ENCODE measurements at regions of chr12 and their contacts with region 1.

Region 1: GRCh38 chr12:101939856-101940265 is 62.5 kb downstream of the DRAM1 start:
- DNase-seq: peak; percentile 83
- ATAC-seq: peak; percentile 66
- H3K4me3 ChIP-seq: no peak overlapping the region
- H3K4me3 Mint-ChIP-seq: no peak overlapping the region
- H3K27ac ChIP-seq: no peak overlapping the region
- H3K27ac Mint-ChIP-seq: peak overlapping the region; percentile 42
- H3K4me1 ChIP-seq: peaks cover 49 to 53% of the 10 kb centered on the region in 2 donors
- H3K4me1 Mint-ChIP-seq: peaks cover 58% of the 10 kb centered on the region
- H3K27me3 ChIP-seq: no peaks in the 10 kb centered on the region
- H3K27me3 Mint-ChIP-seq: no peaks in the 10 kb centered on the region
- CTCF ChIP-seq: peak; percentile 91

Region 2: GRCh38 chr12:100632445-100632892 is 1307.4 kb before region 1 on chr12:
- CTCF ChIA-PET with region 1: no interaction called
- POLR2A ChIA-PET with region 1: no interaction called
- intact Hi-C with region 1: no loop called
- DNase-seq: no peak
- ATAC-seq: no peak
- H3K4me3 ChIP-seq: no peak overlapping the region
- H3K4me3 Mint-ChIP-seq: no peak overlapping the region
- H3K27ac ChIP-seq: no peak overlapping the region
- H3K27ac Mint-ChIP-seq: no peak overlapping the region
- H3K4me1 ChIP-seq: no peaks in the 10 kb centered on the region
- H3K4me1 Mint-ChIP-seq: no peaks in the 10 kb centered on the region
- H3K27me3 ChIP-seq: no peaks in the 10 kb centered on the region
- H3K27me3 Mint-ChIP-seq: no peaks in the 10 kb centered on the region
- CTCF ChIP-seq: no peak

Region 3: DNA sequence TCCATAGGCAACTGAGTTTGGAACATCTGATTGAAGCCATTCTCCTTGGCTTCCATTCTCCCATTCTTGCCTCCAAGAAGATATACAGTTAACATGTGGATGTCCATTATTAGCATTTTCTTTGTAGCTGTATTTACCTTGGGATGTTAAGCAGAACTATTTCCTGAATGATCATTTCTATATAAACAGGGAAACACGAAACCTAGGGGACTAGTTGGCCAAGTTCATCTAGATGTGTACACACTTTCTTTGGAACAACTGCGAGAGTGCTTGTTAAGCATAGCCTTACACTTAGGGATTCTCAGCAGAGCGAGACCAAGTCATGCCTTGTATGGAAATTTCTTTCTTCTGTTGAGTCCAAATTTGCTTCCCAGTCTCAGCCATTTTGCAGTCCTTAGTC is 20.4 kb before region 1 on chr12:
- CTCF ChIA-PET with region 1: interaction called, 89 read pairs
- POLR2A ChIA-PET with region 1: interaction called, 4 read pairs
- intact Hi-C with region 1: loop called (anchors 1 kb)
- DNase-seq: no peak
- ATAC-seq: no peak
- H3K4me3 ChIP-seq: no peak overlapping the region
- H3K4me3 Mint-ChIP-seq: no peak overlapping the region
- H3K27ac ChIP-seq: no peak overlapping the region
- H3K27ac Mint-ChIP-seq: no peak overlapping the region
- H3K4me1 ChIP-seq: peaks cover 10 to 13% of the 10 kb centered on the region in 2 donors
- H3K4me1 Mint-ChIP-seq: peaks cover 19% of the 10 kb centered on the region
- H3K27me3 ChIP-seq: no peaks in the 10 kb centered on the region
- H3K27me3 Mint-ChIP-seq: no peaks in the 10 kb centered on the region
- CTCF ChIP-seq: no peak

Region 4: GRCh38 chr12:102061560-102062418 is 121.9 kb after region 1 on chr12 and contains the start of gene WASHC3:
- CTCF ChIA-PET with region 1: interaction called, 14 read pairs
- POLR2A ChIA-PET with region 1: interaction called, 3 read pairs
- intact Hi-C with region 1: no loop called
- DNase-seq: peak; percentile 95
- ATAC-seq: peak; percentile 96
- H3K4me3 ChIP-seq: peak within 1 kb of the TSS; percentile 72 to 92 (median 89)
- H3K4me3 Mint-ChIP-seq: peak within 1 kb of the TSS; percentile 95
- H3K27ac ChIP-seq: peak within 1 kb of the TSS; percentile 93 to 96
- H3K27ac Mint-ChIP-seq: peak within 1 kb of the TSS; percentile 96
- H3K4me1 ChIP-seq: peaks cover 5 to 12% of the 10 kb centered on the region in 2 donors
- H3K4me1 Mint-ChIP-seq: peaks cover 27% of the 10 kb centered on the region
- H3K27me3 ChIP-seq: peaks cover 0 to 4% (median 0%) of the 10 kb centered on the region in 4 experiments
- H3K27me3 Mint-ChIP-seq: no peaks in the 10 kb centered on the region
- CTCF ChIP-seq: no peak
- total RNA-seq, gene WASHC3: 52.8 and 55.8 TPM in 2 replicates

Region 5: GRCh38 chr12:102484428-102484958 is 544.6 kb after region 1 on chr12:
- CTCF ChIA-PET with region 1: interaction called, 59 read pairs
- POLR2A ChIA-PET with region 1: no interaction called
- intact Hi-C with region 1: loop called (anchors 1 kb)
- DNase-seq: peak; percentile 73
- ATAC-seq: peak; percentile 75
- H3K4me3 ChIP-seq: peak overlapping the region in 3 of 5 experiments; percentile 11 to 55 (median 44)
- H3K4me3 Mint-ChIP-seq: peak overlapping the region; percentile 80
- H3K27ac ChIP-seq: peak overlapping the region; percentile 19 to 44
- H3K27ac Mint-ChIP-seq: peak overlapping the region; percentile 64
- H3K4me1 ChIP-seq: peaks cover 23 to 27% of the 10 kb centered on the region in 2 donors
- H3K4me1 Mint-ChIP-seq: peaks cover 32% of the 10 kb centered on the region
- H3K27me3 ChIP-seq: no peaks in the 10 kb centered on the region
- H3K27me3 Mint-ChIP-seq: no peaks in the 10 kb centered on the region
- CTCF ChIP-seq: peak; percentile 98

Region 6: DNA sequence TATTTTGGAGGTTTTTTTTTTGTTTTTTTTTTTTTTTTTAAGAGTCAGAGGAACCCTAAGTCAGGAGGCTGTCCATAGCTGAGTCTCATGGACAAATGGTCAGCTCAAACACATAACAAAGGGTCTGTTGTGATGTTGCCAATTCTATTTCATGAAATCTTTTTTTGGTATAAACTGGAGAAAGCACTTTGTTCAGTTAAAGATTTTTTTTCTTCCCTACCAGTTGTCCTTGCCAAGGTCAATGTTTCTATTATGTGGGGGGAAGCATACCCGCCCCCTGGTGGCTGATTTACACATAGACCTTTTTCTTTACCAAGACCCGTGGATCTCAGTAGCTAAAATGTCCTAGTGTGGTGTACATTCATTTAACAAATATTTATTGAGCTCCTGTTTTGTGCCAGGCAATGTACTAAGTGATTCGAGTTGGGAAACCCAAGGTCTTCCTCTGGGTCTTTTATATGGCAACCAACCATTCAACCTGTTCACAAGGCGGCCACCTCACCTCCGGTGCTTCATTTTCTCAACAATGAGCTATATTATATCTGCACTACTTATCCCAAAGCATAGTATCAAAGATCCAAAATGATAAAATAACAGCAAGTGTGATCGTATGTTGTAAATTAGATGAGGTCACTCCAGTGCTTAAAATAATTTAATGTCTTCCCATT is 762.7 kb after region 1 on chr12:
- CTCF ChIA-PET with region 1: interaction called, 74 read pairs
- POLR2A ChIA-PET with region 1: no interaction called
- intact Hi-C with region 1: no loop called
- DNase-seq: peak; percentile 73
- ATAC-seq: peak; percentile 33
- H3K4me3 ChIP-seq: no peak overlapping the region
- H3K4me3 Mint-ChIP-seq: no peak overlapping the region
- H3K27ac ChIP-seq: no peak overlapping the region
- H3K27ac Mint-ChIP-seq: no peak overlapping the region
- H3K4me1 ChIP-seq: no peaks in the 10 kb centered on the region
- H3K4me1 Mint-ChIP-seq: no peaks in the 10 kb centered on the region
- H3K27me3 ChIP-seq: peaks cover 0 to 4% (median 0%) of the 10 kb centered on the region in 4 experiments
- H3K27me3 Mint-ChIP-seq: peaks cover 15% of the 10 kb centered on the region
- CTCF ChIP-seq: peak; percentile 79

Region 7: GRCh38 chr12:102769319-102769916 is 829.6 kb after region 1 on chr12:
- CTCF ChIA-PET with region 1: interaction called, 10 read pairs
- POLR2A ChIA-PET with region 1: no interaction called
- intact Hi-C with region 1: no loop called
- DNase-seq: peak; percentile 65
- ATAC-seq: peak; percentile 56
- H3K4me3 ChIP-seq: no peak overlapping the region
- H3K4me3 Mint-ChIP-seq: no peak overlapping the region
- H3K27ac ChIP-seq: no peak overlapping the region
- H3K27ac Mint-ChIP-seq: no peak overlapping the region
- H3K4me1 ChIP-seq: no peaks in the 10 kb centered on the region
- H3K4me1 Mint-ChIP-seq: no peaks in the 10 kb centered on the region
- H3K27me3 ChIP-seq: peaks cover 0 to 7% (median 0%) of the 10 kb centered on the region in 4 experiments
- H3K27me3 Mint-ChIP-seq: peaks cover 26% of the 10 kb centered on the region
- CTCF ChIP-seq: peak; percentile 71